Calu3 (cell line): ENCODE measurements at regions of chr3 and their contacts with region 1.

Region 1: DNA sequence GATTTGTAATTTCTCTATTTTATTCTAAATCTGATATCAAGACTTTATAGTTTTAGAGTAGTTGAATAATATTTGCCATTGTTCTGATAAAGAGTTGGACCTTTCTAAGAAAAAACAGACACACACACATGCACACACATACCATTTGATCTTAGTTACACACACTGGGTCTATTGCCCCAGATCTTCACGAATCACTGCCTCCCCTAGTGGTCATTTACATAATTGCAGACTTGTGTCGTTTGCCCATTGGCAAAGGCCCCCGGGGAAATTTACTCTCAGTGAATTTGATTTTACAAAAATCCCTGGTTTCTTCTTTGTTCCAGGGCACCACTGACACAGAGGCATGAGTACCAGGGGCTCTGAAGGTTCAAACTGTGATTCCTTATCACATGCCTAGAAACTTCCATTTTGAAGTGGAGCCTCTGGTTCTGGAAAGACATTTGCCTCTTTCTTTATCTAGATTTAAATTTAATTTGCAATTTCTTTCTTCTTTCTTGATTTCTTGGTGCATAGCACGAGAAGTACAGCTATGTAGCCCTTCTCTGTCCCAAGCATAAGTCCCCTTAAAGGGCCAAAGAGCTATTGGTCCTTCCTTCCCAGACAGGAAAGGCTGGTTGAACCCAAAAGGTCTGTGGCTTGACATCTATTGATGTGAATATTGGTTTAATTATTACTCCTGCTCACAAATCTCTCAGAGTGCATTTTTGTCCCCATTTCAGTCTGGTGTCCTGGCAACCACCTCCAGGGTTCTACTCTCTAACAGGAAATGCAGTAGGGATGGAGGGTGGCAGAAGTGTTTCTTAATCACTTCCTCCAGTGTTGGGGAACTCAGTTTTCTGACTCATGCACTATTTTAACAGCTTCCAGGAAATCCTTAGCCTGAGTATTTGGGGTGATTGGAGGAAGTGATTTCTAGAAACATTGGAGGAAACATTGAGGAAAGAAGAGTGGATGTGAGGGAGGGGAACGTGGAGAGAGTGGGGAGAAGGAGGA is 32.4 kb upstream of the SLC6A11 start:
- DNase-seq: peak; percentile 57
- H3K4me3 Mint-ChIP-seq: no peak overlapping the region
- H3K27ac Mint-ChIP-seq: no peak overlapping the region
- H3K4me1 Mint-ChIP-seq: no peaks in the 10 kb centered on the region
- H3K27me3 Mint-ChIP-seq: peaks cover 87% of the 10 kb centered on the region
- CTCF ChIP-seq: peak; percentile 64

Region 2: GRCh38 chr3:9749645-9750555 is 1033.8 kb before region 1 on chr3 and contains the start of gene OGG1:
- CTCF ChIA-PET with region 1: no interaction called
- intact Hi-C with region 1: no loop called
- DNase-seq: peak; percentile 95
- H3K4me3 Mint-ChIP-seq: peak within 1 kb of the TSS; percentile 88
- H3K27ac Mint-ChIP-seq: peak within 1 kb of the TSS; percentile 76
- H3K4me1 Mint-ChIP-seq: peaks cover 7% of the 10 kb centered on the region
- H3K27me3 Mint-ChIP-seq: no peaks in the 10 kb centered on the region
- CTCF ChIP-seq: no peak
- total RNA-seq, gene OGG1: 17.1 and 21.8 TPM in 2 replicates

Region 3: DNA sequence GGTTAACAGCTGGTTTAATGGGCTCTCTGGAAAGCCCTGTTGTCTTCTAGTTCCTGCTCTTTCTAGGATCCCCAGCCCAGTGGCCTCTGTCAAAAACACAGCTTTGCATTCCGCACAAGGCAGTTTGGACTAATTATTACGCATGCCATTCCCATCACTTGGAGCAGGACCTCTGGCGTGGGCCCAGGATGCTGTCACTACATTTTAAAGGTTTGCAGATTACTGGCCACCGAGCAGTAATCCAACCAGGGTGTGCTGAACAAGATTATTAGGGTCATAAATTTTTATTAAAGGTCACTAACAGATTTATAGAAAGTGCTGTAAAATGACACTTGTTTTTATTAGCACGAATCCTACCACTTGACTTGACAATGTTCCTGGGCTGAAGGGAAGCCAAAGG is 111.2 kb before region 1 on chr3:
- CTCF ChIA-PET with region 1: no interaction called
- intact Hi-C with region 1: no loop called
- DNase-seq: no peak
- H3K4me3 Mint-ChIP-seq: no peak overlapping the region
- H3K27ac Mint-ChIP-seq: no peak overlapping the region
- H3K4me1 Mint-ChIP-seq: no peaks in the 10 kb centered on the region
- H3K27me3 Mint-ChIP-seq: peaks cover 80% of the 10 kb centered on the region
- CTCF ChIP-seq: no peak

Region 4: DNA sequence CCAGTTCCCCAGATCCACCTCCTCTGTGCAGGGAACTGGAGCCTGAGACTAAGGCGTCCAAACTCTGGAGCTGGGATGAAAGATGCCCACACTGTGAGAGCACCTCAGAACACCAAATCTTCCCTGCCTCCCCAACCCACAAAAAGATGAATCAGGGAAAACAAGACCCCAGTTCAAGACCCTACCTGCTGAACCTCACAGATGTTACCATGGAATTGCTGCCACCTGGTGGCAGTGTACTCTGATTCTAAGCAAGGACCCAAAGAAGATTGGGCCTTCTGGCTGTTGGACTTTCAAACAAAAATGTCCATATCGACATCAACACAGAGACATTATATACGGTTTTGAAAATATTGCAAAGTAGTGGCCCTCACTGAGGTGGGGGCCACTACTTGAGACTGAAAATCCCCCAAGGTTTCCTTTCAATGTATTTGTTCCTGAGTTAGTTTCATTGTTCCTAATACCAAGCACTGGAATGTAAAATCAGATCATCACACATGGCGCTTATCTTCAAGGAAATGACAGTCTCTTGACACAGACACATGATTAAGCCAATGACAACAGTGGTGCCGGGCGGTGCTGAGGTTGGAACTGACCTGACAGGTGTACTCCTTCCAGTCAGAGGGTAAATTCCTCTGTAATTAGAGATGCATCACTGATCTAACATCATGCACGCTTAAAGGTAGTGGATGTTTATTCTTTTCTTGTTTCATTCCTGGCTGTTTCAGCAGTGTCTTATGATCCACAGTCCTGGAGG is 100.0 kb after region 1 on chr3:
- CTCF ChIA-PET with region 1: no interaction called
- intact Hi-C with region 1: loop called (anchors 5 kb)
- DNase-seq: peak; percentile 28
- H3K4me3 Mint-ChIP-seq: no peak overlapping the region
- H3K27ac Mint-ChIP-seq: no peak overlapping the region
- H3K4me1 Mint-ChIP-seq: no peaks in the 10 kb centered on the region
- H3K27me3 Mint-ChIP-seq: peaks cover 96% of the 10 kb centered on the region
- CTCF ChIP-seq: peak; percentile 13